Pancreas (tissue), 10 donors: ENCODE measurements at regions of chr1 and their contacts with region 1.

Region 1: DNA sequence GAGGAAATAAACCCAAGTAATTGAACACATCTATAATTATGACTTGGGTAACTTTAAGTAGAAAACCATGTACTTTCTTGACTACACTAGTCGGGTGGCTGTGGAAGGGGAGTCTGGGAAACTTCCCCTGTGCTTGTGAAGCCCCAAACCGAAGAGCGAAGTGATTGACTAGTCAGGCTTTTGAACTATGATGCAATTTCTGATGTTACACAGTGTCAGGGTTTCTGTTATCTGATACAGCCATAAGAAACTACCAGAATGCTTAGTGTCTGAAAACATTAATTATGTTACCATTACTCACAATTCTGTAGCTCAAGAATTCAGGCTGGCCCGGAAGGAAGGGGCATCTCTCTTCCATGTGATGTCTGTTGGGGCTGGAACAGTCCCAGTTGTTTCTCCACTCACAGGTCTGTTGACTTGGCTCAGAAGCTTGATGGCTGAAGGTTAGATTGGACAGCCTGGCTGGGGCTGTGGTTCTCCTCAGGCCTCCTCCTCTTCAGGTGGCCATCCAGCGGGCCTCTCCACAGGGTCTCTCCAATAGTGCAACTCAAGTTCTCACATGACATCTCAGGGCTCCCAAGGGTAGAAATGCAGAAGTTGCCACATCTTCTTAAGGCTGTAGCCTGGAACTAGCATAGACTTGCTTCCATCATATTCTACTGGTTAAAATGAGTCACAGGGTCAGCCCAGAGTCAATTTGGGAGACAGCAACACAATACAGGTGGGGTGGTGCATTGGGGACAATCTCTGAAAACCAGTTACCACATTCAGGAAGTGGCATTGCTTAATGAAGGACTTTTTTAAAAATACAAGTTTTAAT is 8.3 kb upstream of the C8B start:
- DNase-seq: no peak
- ATAC-seq: no peak
- H3K4me3 ChIP-seq: no peak overlapping the region
- H3K27ac ChIP-seq: no peak overlapping the region
- H3K4me1 ChIP-seq: peaks cover 0 to 3% (median under 1%) of the 10 kb centered on the region in 3 donors
- H3K27me3 ChIP-seq: no peaks in the 10 kb centered on the region
- CTCF ChIP-seq: no peak

Region 2: DNA sequence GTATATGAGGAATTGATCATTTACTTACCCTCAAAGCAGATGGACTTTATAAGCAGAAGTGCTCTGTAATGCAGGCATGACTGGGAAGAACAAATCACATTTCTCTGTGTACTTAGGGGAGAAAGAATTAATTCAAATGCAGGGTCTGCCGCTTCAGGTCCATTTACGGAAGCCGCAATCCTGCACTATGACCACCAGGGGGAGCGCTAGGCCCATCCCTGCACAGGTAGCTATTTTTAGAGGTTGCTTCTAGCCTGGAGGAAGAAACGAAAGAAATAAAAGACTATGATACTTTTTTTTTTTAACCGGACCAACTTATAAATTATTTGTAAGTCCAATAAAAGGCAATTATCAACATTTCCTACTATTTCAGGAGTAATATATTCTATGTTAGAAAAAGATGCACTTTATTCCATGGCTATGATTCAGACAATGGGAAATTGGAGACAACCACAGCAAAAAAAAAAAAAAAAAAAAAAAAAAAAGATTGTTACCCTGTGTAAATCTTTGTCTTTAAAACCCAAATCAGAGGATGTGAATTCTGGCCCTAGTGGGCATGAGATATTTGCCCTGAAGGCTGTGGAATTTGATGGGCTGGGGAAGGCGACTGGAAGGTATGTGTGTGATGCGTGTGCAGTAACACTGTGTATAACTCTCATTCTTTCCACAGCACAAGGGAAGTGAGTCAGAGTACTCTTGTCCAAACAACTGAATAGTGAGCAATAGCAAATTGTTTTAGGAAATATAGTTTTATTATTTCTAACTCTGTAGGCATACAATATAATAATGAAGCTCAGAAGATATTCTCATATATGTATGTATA is 142.1 kb before region 1 on chr1:
- intact Hi-C with region 1: loop called in 2 of 3 experiments (anchors 5 kb)
- DNase-seq: peak; percentile 37 to 75 (median 66)
- ATAC-seq: peak; percentile 69 to 97 (median 92)
- H3K4me3 ChIP-seq: no peak overlapping the region
- H3K27ac ChIP-seq: no peak overlapping the region
- H3K4me1 ChIP-seq: no peaks in the 10 kb centered on the region
- H3K27me3 ChIP-seq: peaks cover 0 to 4% (median 0%) of the 10 kb centered on the region in 4 donors
- CTCF ChIP-seq: peak; percentile 86 to 97 (median 96)

Region 3: GRCh38 chr1:56864430-56864829 is 109.7 kb before region 1 on chr1:
- intact Hi-C with region 1: no loop called
- DNase-seq: no peak
- ATAC-seq: no peak
- H3K4me3 ChIP-seq: no peak overlapping the region
- H3K27ac ChIP-seq: no peak overlapping the region
- H3K4me1 ChIP-seq: no peaks in the 10 kb centered on the region
- H3K27me3 ChIP-seq: no peaks in the 10 kb centered on the region
- CTCF ChIP-seq: no peak

Region 4: GRCh38 chr1:57258557-57259325 is 284.6 kb after region 1 on chr1:
- intact Hi-C with region 1: no loop called
- DNase-seq: no peak
- ATAC-seq: no peak
- H3K4me3 ChIP-seq: no peak overlapping the region
- H3K27ac ChIP-seq: no peak overlapping the region
- H3K4me1 ChIP-seq: no peaks in the 10 kb centered on the region
- H3K27me3 ChIP-seq: no peaks in the 10 kb centered on the region
- CTCF ChIP-seq: no peak